ENCODE measurements at regions of chr16 and their contacts with region 1.

Region 1: DNA sequence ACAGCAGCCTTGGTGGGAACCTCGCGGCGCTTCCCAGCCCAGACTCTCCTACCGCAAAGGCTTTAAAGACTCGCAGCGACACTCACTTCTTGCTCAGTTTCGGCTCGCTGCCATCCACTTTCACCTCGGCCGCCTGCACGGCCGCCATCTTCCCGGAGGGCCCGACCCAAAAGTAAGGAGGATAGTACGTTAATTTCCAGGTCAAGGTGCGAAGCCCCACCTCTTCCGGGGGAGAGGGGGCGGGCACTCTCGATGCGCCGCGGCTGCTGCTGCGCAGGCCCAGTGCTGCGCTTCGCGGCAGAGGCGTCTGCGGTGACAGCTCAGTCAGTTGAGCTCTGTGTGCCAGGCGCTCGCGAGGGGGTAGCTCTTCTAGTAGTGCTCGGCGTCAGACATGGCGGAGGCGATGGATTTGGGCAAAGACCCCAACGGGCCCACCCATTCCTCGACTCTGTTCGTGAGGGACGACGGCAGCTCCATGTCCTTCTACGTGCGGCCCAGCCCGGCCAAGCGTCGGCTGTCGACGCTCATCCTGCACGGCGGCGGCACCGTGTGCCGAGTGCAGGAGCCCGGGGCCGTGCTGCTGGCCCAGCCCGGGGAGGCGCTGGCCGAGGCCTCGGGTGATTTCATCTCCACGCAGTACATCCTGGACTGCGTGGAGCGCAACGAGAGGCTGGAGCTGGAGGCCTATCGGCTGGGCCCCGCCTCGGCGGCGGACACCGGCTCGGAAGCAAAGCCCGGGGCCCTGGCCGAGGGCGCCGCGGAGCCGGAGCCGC is at the starts of genes KARS1 and TERF2IP:
- DNase-seq: peak; percentile 90 to 94 (median 93)
- H3K4me3 ChIP-seq: peak within 1 kb of the TSS; percentile 95
- H3K27ac ChIP-seq: peak within 1 kb of the TSS; percentile 89 to 94
- H3K4me1 ChIP-seq: peaks cover 12% of the 10 kb centered on the region
- H3K27me3 ChIP-seq: no peaks in the 10 kb centered on the region
- CTCF ChIP-seq: no peak
- EP300 ChIP-seq: no peak
- POLR2A ChIP-seq: peak; percentile 90
- total RNA-seq, gene KARS1: 55.6 to 109 (median 92.8) TPM
- total RNA-seq, gene TERF2IP: 66.6 to 112 (median 83.7) TPM

Region 2: GRCh38 chr16:75471723-75472633 is 175.7 kb before region 1 on chr16:
- intact Hi-C with region 1: loop called in 1 of 4 experiments (anchors 10 kb)
- DNase-seq: peak; percentile 32 to 65 (median 49)
- H3K4me3 ChIP-seq: no peak overlapping the region
- H3K27ac ChIP-seq: no peak overlapping the region
- H3K4me1 ChIP-seq: no peaks in the 10 kb centered on the region
- H3K27me3 ChIP-seq: no peaks in the 10 kb centered on the region
- CTCF ChIP-seq: peak; percentile 36 to 49 (median 39)
- EP300 ChIP-seq: no peak
- POLR2A ChIP-seq: no peak

Region 3: GRCh38 chr16:75703306-75703705 is 55.6 kb after region 1 on chr16:
- intact Hi-C with region 1: no loop called
- DNase-seq: no peak
- H3K4me3 ChIP-seq: no peak overlapping the region
- H3K27ac ChIP-seq: no peak overlapping the region
- H3K4me1 ChIP-seq: no peaks in the 10 kb centered on the region
- H3K27me3 ChIP-seq: no peaks in the 10 kb centered on the region
- CTCF ChIP-seq: no peak
- EP300 ChIP-seq: no peak
- POLR2A ChIP-seq: no peak

Region 4: GRCh38 chr16:76007649-76008048 is 360.0 kb after region 1 on chr16:
- intact Hi-C with region 1: no loop called
- DNase-seq: no peak
- H3K4me3 ChIP-seq: no peak overlapping the region
- H3K27ac ChIP-seq: no peak overlapping the region
- H3K4me1 ChIP-seq: no peaks in the 10 kb centered on the region
- H3K27me3 ChIP-seq: no peaks in the 10 kb centered on the region
- CTCF ChIP-seq: no peak
- EP300 ChIP-seq: no peak
- POLR2A ChIP-seq: no peak